MCF 10A (cell line): ENCODE measurements at regions of chr1 and their contacts with region 1.

Region 1: GRCh38 chr1:3727042-3727824 is 25.0 kb upstream of the CCDC27 start:
- DNase-seq: no peak
- H3K4me3 Mint-ChIP-seq: no peak overlapping the region
- H3K27ac Mint-ChIP-seq: no peak overlapping the region
- H3K4me1 Mint-ChIP-seq: no peaks in the 10 kb centered on the region
- H3K27me3 Mint-ChIP-seq: no peaks in the 10 kb centered on the region
- CTCF ChIP-seq: no peak

Region 2: GRCh38 chr1:3453203-3453761 is 274.0 kb before region 1 on chr1:
- CTCF ChIA-PET with region 1: no interaction called
- POLR2A ChIA-PET with region 1: no interaction called
- intact Hi-C with region 1: loop called (anchors 2 kb)
- DNase-seq: peak; percentile 78
- H3K4me3 Mint-ChIP-seq: peak overlapping the region; percentile 76
- H3K27ac Mint-ChIP-seq: no peak overlapping the region
- H3K4me1 Mint-ChIP-seq: no peaks in the 10 kb centered on the region
- H3K27me3 Mint-ChIP-seq: peaks cover 19% of the 10 kb centered on the region
- CTCF ChIP-seq: peak; percentile 97

Region 3: GRCh38 chr1:3564921-3565827 is 162.1 kb before region 1 on chr1:
- CTCF ChIA-PET with region 1: no interaction called
- POLR2A ChIA-PET with region 1: no interaction called
- intact Hi-C with region 1: loop called (anchors 1 kb)
- DNase-seq: peak; percentile 38
- H3K4me3 Mint-ChIP-seq: no peak overlapping the region
- H3K27ac Mint-ChIP-seq: no peak overlapping the region
- H3K4me1 Mint-ChIP-seq: peaks cover 7% of the 10 kb centered on the region
- H3K27me3 Mint-ChIP-seq: peaks cover 11% of the 10 kb centered on the region
- CTCF ChIP-seq: peak; percentile 97

Region 4: GRCh38 chr1:3649342-3650247 is 77.6 kb before region 1 on chr1 and contains the start of gene WRAP73:
- CTCF ChIA-PET with region 1: interaction called, 12 read pairs
- POLR2A ChIA-PET with region 1: no interaction called
- intact Hi-C with region 1: loop called (anchors 1 kb)
- DNase-seq: peak; percentile 87
- H3K4me3 Mint-ChIP-seq: peak within 1 kb of the TSS; percentile 72
- H3K27ac Mint-ChIP-seq: no peak within 1 kb of the TSS
- H3K4me1 Mint-ChIP-seq: peaks cover 7% of the 10 kb centered on the region
- H3K27me3 Mint-ChIP-seq: no peaks in the 10 kb centered on the region
- CTCF ChIP-seq: no peak
- total RNA-seq, gene WRAP73: 25.3 and 29.8 TPM in 2 replicates

Region 5: GRCh38 chr1:3668585-3669300 is 58.5 kb before region 1 on chr1:
- CTCF ChIA-PET with region 1: interaction called, 11 read pairs
- POLR2A ChIA-PET with region 1: interaction called, 3 read pairs
- intact Hi-C with region 1: no loop called
- DNase-seq: peak; percentile 63
- H3K4me3 Mint-ChIP-seq: peak overlapping the region; percentile 15
- H3K27ac Mint-ChIP-seq: no peak overlapping the region
- H3K4me1 Mint-ChIP-seq: peaks cover 20% of the 10 kb centered on the region
- H3K27me3 Mint-ChIP-seq: no peaks in the 10 kb centered on the region
- CTCF ChIP-seq: no peak

Region 6: GRCh38 chr1:3695326-3696217 is 31.7 kb before region 1 on chr1:
- CTCF ChIA-PET with region 1: interaction called, 18 read pairs
- POLR2A ChIA-PET with region 1: no interaction called
- intact Hi-C with region 1: loop called (anchors 1 kb)
- DNase-seq: peak; percentile 59
- H3K4me3 Mint-ChIP-seq: no peak overlapping the region
- H3K27ac Mint-ChIP-seq: no peak overlapping the region
- H3K4me1 Mint-ChIP-seq: peaks cover 39% of the 10 kb centered on the region
- H3K27me3 Mint-ChIP-seq: no peaks in the 10 kb centered on the region
- CTCF ChIP-seq: peak; percentile 79

Region 7: GRCh38 chr1:3702990-3703728 is 24.1 kb before region 1 on chr1:
- CTCF ChIA-PET with region 1: interaction called, 19 read pairs
- POLR2A ChIA-PET with region 1: interaction called, 6 read pairs
- intact Hi-C with region 1: no loop called
- DNase-seq: peak; percentile 69
- H3K4me3 Mint-ChIP-seq: peak overlapping the region; percentile 46
- H3K27ac Mint-ChIP-seq: peak overlapping the region; percentile 46
- H3K4me1 Mint-ChIP-seq: peaks cover 28% of the 10 kb centered on the region
- H3K27me3 Mint-ChIP-seq: no peaks in the 10 kb centered on the region
- CTCF ChIP-seq: peak; percentile 19

Region 8: GRCh38 chr1:3890389-3891328 is 163.4 kb after region 1 on chr1:
- CTCF ChIA-PET with region 1: no interaction called
- POLR2A ChIA-PET with region 1: no interaction called
- intact Hi-C with region 1: no loop called
- DNase-seq: no peak
- H3K4me3 Mint-ChIP-seq: no peak overlapping the region
- H3K27ac Mint-ChIP-seq: no peak overlapping the region
- H3K4me1 Mint-ChIP-seq: no peaks in the 10 kb centered on the region
- H3K27me3 Mint-ChIP-seq: no peaks in the 10 kb centered on the region
- CTCF ChIP-seq: no peak